Activated T-helper 1 cell treated with anti-CD3 and anti-CD28 coated beads, Interleukin-12 subunit alpha, Interleukin-12 subunit beta, Interleukin-2, Interleukin-4 antibody, amounts not matched to agents 30 ng/mL and 10 ng/mL and 1 ng/mL, durations not matched to agents 14 hours and 24 hours and 36 hours (primary cell): ENCODE measurements at regions of chr1 and their contacts with region 1.

Region 1: GRCh38 chr1:110034451-110035235 is at the start of gene STRIP1:
- DNase-seq: peak; percentile 91
- H3K4me3 Mint-ChIP-seq: peak within 1 kb of the TSS; percentile 95
- H3K27ac Mint-ChIP-seq: peak within 1 kb of the TSS; percentile 85
- H3K4me1 Mint-ChIP-seq: peaks cover 54% of the 10 kb centered on the region
- H3K27me3 Mint-ChIP-seq: no peaks in the 10 kb centered on the region
- total RNA-seq, gene STRIP1: 41.5 and 43.7 TPM in 2 replicates

Region 2: DNA sequence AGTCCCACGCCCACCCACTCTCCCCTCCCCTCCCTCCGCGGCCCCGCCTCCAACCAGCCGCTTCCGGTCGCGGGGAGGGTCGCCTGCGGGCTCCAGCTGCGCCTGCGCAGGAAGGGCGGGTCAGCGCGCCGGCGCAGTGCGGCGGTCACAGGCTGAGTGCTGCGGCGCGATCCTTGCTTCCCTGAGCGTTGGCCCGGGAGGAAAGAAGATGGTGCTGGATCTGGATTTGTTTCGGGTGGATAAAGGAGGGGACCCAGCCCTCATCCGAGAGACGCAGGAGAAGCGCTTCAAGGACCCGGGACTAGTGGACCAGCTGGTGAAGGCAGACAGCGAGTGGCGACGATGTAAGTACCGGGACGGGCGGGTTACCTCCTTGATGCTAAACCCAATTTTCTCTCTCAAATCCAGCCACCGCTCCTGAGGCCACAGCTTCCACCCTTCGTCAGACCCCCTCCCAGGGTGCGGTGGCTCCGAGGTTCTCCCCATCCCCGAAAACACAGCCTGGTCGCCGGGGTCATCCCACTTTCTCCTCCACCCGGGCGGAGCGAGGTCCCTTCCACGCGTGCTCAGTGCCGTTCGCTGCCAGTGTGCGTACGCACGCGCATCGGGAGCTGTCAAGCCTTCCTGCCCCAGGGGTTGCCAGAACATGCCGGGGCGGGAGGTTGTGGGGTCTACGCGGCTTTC is 820.7 kb before region 1 on chr1 and contains the start of gene SARS1:
- intact Hi-C with region 1: loop called (anchors 5 kb)
- DNase-seq: peak; percentile 88
- H3K4me3 Mint-ChIP-seq: peak within 1 kb of the TSS; percentile 94
- H3K27ac Mint-ChIP-seq: peak within 1 kb of the TSS; percentile 94
- H3K4me1 Mint-ChIP-seq: peaks cover 37% of the 10 kb centered on the region
- H3K27me3 Mint-ChIP-seq: peaks cover 3% of the 10 kb centered on the region
- total RNA-seq, gene SARS1: 147 and 154 TPM in 2 replicates

Region 3: DNA sequence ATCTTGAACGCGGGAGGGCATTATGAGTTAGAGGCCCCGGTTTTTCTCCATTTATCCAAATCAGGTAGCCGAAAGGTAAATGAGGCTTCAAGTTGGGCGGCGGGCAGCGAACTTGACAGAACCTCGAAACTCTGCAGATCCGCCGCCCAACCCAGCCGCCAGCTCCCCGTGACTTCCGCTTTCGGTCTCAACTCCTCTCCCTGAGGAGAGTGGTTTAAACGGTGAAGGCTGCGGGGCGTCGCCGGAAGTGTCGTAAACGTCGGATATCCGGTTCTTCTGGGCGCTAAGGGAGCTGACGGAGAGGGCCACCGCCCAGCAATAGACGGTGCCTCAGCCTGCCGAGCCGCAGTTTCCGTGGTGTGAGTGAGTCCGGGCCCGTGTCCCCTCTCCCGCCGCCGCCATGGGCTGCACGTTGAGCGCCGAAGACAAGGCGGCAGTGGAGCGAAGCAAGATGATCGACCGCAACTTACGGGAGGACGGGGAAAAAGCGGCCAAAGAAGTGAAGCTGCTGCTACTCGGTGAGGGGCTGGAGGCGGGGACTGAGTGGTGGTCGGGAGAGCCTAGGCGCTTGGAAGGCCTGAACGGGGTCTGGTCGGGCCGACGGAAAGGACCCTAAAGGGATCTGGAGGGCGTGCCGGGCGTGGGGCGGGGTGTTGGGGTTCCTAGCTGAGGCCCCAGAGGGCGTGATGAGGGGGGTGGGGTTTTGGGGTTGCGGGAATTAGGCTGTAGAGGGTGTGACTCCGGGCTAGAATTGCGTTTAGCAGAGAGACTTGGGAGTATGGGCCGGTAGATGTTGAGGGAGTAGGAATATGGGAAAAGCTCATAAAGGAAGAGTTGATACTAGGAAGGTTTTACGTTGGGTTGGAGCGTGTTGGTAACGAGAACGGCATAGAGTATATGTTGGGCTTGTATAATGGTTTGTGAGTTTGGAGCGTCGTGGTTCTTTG is 486.0 kb before region 1 on chr1 and contains the start of gene GNAI3:
- intact Hi-C with region 1: loop called (anchors 1 kb)
- DNase-seq: peak; percentile 96
- H3K4me3 Mint-ChIP-seq: peak within 1 kb of the TSS; percentile 94
- H3K27ac Mint-ChIP-seq: peak within 1 kb of the TSS; percentile 96
- H3K4me1 Mint-ChIP-seq: peaks cover 48% of the 10 kb centered on the region
- H3K27me3 Mint-ChIP-seq: no peaks in the 10 kb centered on the region
- total RNA-seq, gene GNAI3: 8.4 and 8.9 TPM in 2 replicates

Region 4: DNA sequence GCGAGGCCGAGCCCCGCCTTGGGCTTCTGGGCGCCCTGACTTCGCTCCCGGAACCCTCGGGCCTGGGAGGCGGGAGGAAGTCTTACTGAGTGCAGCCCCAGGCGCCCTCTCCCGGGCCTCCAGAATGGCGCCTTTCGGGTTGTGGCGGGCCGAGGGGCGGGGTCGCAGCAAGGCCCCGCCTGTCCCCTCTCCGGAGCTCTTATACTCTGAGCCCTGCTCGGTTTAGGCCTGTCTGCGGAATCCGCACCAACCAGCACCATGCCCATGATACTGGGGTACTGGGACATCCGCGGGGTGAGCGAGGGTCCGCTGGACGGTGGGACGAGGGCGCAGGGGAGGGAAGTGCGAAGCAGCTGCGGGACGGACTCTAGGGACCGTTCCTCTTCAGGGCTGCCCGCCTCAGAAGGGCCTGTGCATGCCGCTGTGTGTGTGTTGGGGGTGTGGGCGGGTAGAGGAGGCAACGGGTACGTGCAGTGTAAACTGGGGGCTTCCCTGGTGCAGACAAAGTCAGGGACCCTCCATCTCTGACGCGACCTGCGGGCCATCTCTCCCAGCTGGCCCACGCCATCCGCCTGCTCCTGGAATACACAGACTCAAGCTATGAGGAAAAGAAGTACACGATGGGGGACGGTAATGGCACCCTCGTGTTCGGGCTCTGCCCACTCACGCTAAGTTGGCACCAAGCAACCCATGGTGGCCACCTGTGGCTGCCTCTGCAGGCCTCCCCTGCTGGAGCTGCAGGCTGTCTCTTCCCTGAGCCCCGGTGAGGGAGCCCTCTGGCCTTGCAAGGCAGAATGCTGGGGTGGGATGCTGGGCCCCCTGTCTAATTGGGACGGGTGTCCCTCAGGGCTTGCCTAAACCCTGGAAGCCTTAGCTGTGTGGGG is 346.8 kb before region 1 on chr1 and contains the start of gene GSTM1:
- intact Hi-C with region 1: loop called (anchors 2 kb)
- DNase-seq: peak; percentile 86
- H3K4me3 Mint-ChIP-seq: peak within 1 kb of the TSS; percentile 93
- H3K27ac Mint-ChIP-seq: peak within 1 kb of the TSS; percentile 98
- H3K4me1 Mint-ChIP-seq: peaks cover 20% of the 10 kb centered on the region
- H3K27me3 Mint-ChIP-seq: peaks cover 4% of the 10 kb centered on the region
- total RNA-seq, gene GSTM1: 77.4 and 86.4 TPM in 2 replicates

Region 5: GRCh38 chr1:110011527-110012041 is 23.1 kb before region 1 on chr1:
- intact Hi-C with region 1: loop called (anchors 1 kb)
- DNase-seq: peak; percentile 35
- H3K4me3 Mint-ChIP-seq: no peak overlapping the region
- H3K27ac Mint-ChIP-seq: no peak overlapping the region
- H3K4me1 Mint-ChIP-seq: peaks cover 5% of the 10 kb centered on the region
- H3K27me3 Mint-ChIP-seq: no peaks in the 10 kb centered on the region

Region 6: GRCh38 chr1:110068646-110069403 is 34.2 kb after region 1 on chr1:
- intact Hi-C with region 1: no loop called
- DNase-seq: no peak
- H3K4me3 Mint-ChIP-seq: peak overlapping the region; percentile 53
- H3K27ac Mint-ChIP-seq: peak overlapping the region; percentile 85
- H3K4me1 Mint-ChIP-seq: peaks cover 12% of the 10 kb centered on the region
- H3K27me3 Mint-ChIP-seq: peaks cover 64% of the 10 kb centered on the region

Region 7: GRCh38 chr1:110106013-110106941 is 71.6 kb after region 1 on chr1:
- intact Hi-C with region 1: loop called (anchors 1 kb)
- DNase-seq: peak; percentile 40
- H3K4me3 Mint-ChIP-seq: no peak overlapping the region
- H3K27ac Mint-ChIP-seq: no peak overlapping the region
- H3K4me1 Mint-ChIP-seq: no peaks in the 10 kb centered on the region
- H3K27me3 Mint-ChIP-seq: peaks cover 13% of the 10 kb centered on the region

Region 8: DNA sequence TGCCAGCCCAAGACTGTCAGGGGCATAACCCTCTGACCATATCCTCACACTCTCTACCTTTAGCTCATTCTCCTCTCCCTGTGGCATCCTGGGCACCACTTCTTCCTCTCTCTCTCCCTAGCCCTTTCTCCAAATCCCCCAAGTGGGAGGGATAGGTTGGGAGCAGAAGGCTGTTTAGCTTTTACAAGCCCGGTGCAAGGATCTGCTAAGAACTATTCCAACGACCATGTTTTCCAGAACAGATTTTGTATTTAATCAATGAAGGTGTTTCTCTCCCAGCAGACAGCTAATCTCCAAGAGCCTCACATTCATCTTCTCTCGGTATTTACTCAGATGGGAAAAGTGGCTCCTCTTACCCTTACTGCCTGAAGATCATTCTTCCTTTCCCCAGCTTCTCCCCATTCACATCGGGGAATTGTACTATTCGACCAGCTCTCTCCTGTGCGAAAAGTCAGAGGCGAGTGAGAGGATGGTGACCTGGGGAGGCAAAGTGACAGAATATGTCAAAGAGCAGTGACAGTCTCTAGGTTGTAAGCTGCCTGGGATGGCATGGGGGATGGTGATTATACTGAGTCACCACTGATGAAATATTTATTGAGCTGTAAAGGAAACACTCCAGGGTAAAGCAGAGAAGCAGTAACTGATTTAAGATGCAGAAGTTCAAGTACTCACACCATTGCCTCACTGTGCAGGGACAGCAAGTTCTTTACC is 257.5 kb after region 1 on chr1:
- intact Hi-C with region 1: no loop called
- DNase-seq: no peak
- H3K4me3 Mint-ChIP-seq: no peak overlapping the region
- H3K27ac Mint-ChIP-seq: no peak overlapping the region
- H3K4me1 Mint-ChIP-seq: no peaks in the 10 kb centered on the region
- H3K27me3 Mint-ChIP-seq: peaks cover 9% of the 10 kb centered on the region

Region 9: GRCh38 chr1:110407260-110408210 is 372.9 kb after region 1 on chr1 and contains the start of gene LAMTOR5:
- intact Hi-C with region 1: loop called (anchors 10 kb)
- DNase-seq: peak; percentile 90
- H3K4me3 Mint-ChIP-seq: peak within 1 kb of the TSS; percentile 100
- H3K27ac Mint-ChIP-seq: peak within 1 kb of the TSS; percentile 100
- H3K4me1 Mint-ChIP-seq: peaks cover 22% of the 10 kb centered on the region
- H3K27me3 Mint-ChIP-seq: no peaks in the 10 kb centered on the region
- total RNA-seq, gene LAMTOR5: 163 and 184 TPM in 2 replicates